Heart right ventricle (tissue), 16 donors: ENCODE measurements at regions of chr11 and their contacts with region 1.

Region 1: GRCh38 chr11:57131080-57131790 is 50.5 kb upstream of the LRRC55 start:
- DNase-seq: peak; percentile 14 to 20
- ATAC-seq: peak in 7 of 8 donors; percentile 62 to 82 (median 77)
- H3K4me3 ChIP-seq: no peak overlapping the region
- H3K27ac ChIP-seq: no peak overlapping the region
- H3K4me1 ChIP-seq: peaks cover 0 to 10% (median 0%) of the 10 kb centered on the region in 9 donors
- H3K27me3 ChIP-seq: peaks cover 0 to 11% (median 0%) of the 10 kb centered on the region in 7 donors
- CTCF ChIP-seq: peak; percentile 44 to 79 (median 66)

Region 2: GRCh38 chr11:56841210-56841810 is 289.9 kb before region 1 on chr11:
- intact Hi-C with region 1: loop called in 2 of 10 experiments (anchors 5 to 10 kb)
- DNase-seq: peak in 1 of 2 donors; percentile 40
- ATAC-seq: peak in 3 of 8 donors; percentile 35 to 75 (median 53)
- H3K4me3 ChIP-seq: no peak overlapping the region
- H3K27ac ChIP-seq: no peak overlapping the region
- H3K4me1 ChIP-seq: peaks cover 0 to 4% (median 0%) of the 10 kb centered on the region in 9 donors
- H3K27me3 ChIP-seq: peaks cover 0 to 9% (median 0%) of the 10 kb centered on the region in 7 donors
- CTCF ChIP-seq: peak; percentile 45 to 81 (median 70)

Region 3: GRCh38 chr11:57094181-57094935 is 36.9 kb before region 1 on chr11:
- intact Hi-C with region 1: no loop called
- DNase-seq: no peak
- ATAC-seq: no peak
- H3K4me3 ChIP-seq: no peak overlapping the region
- H3K27ac ChIP-seq: no peak overlapping the region
- H3K4me1 ChIP-seq: peaks cover 0 to 21% (median 5%) of the 10 kb centered on the region in 9 donors
- H3K27me3 ChIP-seq: no peaks in the 10 kb centered on the region
- CTCF ChIP-seq: no peak

Region 4: GRCh38 chr11:57196596-57196995 is 65.4 kb after region 1 on chr11:
- intact Hi-C with region 1: loop called in 1 of 10 experiments (anchors 10 kb)
- DNase-seq: no peak
- ATAC-seq: peak in 2 of 8 donors; percentile 33 to 48
- H3K4me3 ChIP-seq: no peak overlapping the region
- H3K27ac ChIP-seq: peak overlapping the region in 6 of 10 donors; percentile 12 to 75 (median 56)
- H3K4me1 ChIP-seq: peaks cover 13 to 79% (median 58%) of the 10 kb centered on the region in 9 donors
- H3K27me3 ChIP-seq: no peaks in the 10 kb centered on the region
- CTCF ChIP-seq: no peak

Region 5: DNA sequence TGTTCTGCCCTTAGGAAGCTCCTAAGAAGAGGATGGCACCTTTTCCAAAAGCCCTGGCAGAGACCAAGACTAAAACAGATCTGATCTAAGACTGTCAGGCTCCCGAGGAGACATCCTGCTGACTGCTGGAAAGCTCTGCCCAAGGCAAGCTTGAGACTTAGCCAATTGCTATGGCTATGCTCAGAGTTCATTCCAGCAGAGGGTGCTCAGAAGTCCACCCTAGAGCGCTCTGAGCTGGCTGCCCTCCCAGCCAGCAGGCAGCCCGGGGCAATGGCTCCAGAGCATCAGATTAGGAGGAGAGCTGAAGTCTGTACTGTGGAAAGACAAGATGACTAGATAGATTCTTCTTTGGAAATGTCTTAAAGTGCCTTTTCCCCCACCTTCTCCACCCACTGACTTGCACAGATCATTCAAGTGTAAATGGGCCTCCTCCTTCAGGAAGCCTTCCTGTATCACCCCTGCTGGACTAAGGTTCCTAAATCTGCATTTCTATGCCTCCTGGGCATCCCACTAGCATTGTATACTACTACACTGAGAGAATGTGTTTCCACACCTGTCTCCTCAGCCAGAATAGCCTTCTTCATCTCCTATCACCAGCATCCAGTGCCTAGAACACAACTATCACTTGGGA is 73.9 kb after region 1 on chr11:
- intact Hi-C with region 1: loop called in 1 of 10 experiments (anchors 5 kb)
- DNase-seq: peak in 1 of 2 donors; percentile 30
- ATAC-seq: peak in 7 of 8 donors; percentile 13 to 49 (median 22)
- H3K4me3 ChIP-seq: no peak overlapping the region
- H3K27ac ChIP-seq: peak overlapping the region in 7 of 10 donors; percentile 6 to 83 (median 46)
- H3K4me1 ChIP-seq: peaks cover 26 to 84% (median 52%) of the 10 kb centered on the region in 9 donors
- H3K27me3 ChIP-seq: peaks cover 0 to 5% (median 0%) of the 10 kb centered on the region in 7 donors
- CTCF ChIP-seq: peak in 5 of 9 donors; percentile 16 to 48 (median 37)